Tibial artery (tissue), 4 donors: ENCODE measurements at regions of chr18 and their contacts with region 1.

Region 1: DNA sequence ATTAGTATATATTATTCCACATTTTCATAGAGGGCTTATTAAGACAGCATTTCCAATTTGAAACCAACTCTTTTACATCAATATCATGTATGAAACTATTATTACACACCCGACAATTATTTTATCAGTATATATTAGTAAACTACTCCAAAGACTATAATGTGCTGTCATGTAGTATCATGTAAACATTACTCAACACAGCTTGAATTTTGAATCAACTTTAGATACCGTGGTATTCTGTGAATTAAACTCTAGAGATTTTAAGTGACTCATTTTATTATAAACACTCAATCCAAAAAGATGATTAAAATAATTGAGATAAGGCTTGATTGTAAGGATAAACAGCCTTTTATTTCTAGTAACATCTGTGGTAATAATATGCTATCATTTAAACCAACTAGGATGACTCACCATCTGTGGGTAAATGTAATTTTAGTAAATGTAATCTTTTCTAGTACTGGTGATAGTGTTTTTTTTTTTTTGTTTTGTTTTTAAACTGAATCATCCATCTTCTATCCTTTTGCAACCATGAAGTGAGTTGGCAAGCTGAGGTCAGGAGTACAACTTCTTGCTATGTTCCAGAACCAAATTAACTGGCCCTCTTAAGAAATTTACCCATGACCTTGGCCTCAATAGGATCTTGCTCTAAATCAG is 144.3 kb upstream of the SMAD7 start:
- DNase-seq: peak in 1 of 2 donors; percentile 27
- H3K4me3 ChIP-seq: no peak overlapping the region
- H3K27ac ChIP-seq: peak overlapping the region; percentile 60 to 64
- H3K4me1 ChIP-seq: peaks cover 0 to 31% (median 10%) of the 10 kb centered on the region in 4 donors
- H3K27me3 ChIP-seq: no peaks in the 10 kb centered on the region
- CTCF ChIP-seq: no peak

Region 2: GRCh38 chr18:49151482-49151881 is 56.4 kb after region 1 on chr18:
- intact Hi-C with region 1: loop called (anchors 5 kb)
- DNase-seq: no peak
- H3K4me3 ChIP-seq: no peak overlapping the region
- H3K27ac ChIP-seq: no peak overlapping the region
- H3K4me1 ChIP-seq: peaks cover 0 to 14% (median 1%) of the 10 kb centered on the region in 4 donors
- H3K27me3 ChIP-seq: no peaks in the 10 kb centered on the region
- CTCF ChIP-seq: no peak